CD4-positive, alpha-beta memory T cell (primary cell): ENCODE measurements at regions of chr19 and their contacts with region 1.

Region 1: GRCh38 chr19:16382775-16383543 is 58.3 kb downstream of the KLF2 start:
- DNase-seq: peak; percentile 72 to 80 (median 77)
- H3K4me3 ChIP-seq: peak overlapping the region in 1 of 2 donors; percentile 50
- H3K4me3 Mint-ChIP-seq: peak overlapping the region; percentile 63 to 85 (median 77)
- H3K27ac ChIP-seq: peak overlapping the region; percentile 66
- H3K27ac Mint-ChIP-seq: peak overlapping the region; percentile 93 to 97 (median 96)
- H3K4me1 ChIP-seq: peaks cover 69% of the 10 kb centered on the region
- H3K4me1 Mint-ChIP-seq: peaks cover 35 to 76% (median 60%) of the 10 kb centered on the region in 4 donors
- H3K27me3 ChIP-seq: no peaks in the 10 kb centered on the region
- H3K27me3 Mint-ChIP-seq: no peaks in the 10 kb centered on the region

Region 2: DNA sequence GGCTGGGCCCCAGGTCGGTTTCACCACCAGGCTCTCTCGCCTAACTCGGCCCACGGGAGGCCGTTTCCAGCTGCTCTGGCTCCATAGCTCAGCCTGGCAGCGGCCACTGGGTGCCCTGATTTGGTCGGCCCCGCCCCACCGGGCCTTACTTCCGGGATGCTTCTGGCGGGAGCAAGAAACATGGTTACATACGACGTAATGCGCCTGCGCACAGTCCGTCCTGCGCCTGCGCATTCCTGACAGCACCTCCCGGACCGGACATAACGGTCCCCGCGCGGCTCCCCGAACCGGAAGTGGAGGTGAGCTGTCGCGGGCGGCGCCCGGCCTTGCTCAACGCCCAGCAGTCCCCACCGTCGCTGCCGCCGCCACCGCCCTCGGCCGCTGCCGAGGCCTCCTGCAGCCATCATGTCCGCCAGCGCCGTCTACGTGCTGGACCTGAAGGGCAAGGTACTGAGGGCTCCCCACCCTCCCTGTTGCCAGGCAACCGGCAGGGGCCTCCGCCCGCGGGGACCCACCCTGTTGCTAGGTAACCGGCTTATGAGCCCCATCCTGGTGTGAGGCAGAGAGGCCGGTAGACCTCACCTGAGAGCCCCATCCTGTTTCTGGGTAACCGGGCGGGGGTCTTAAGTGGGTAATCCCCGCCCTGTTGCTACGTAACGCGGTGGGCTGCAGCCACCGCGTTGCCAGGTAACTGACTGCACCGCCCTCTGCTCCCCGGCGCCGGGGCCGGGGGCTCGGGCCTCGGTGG is 185.2 kb before region 1 on chr19 and contains the start of gene AP1M1:
- CTCF ChIA-PET with region 1: interaction called, 4 read pairs
- POLR2A ChIA-PET with region 1: no interaction called
- intact Hi-C with region 1: loop called (anchors 5 kb)
- DNase-seq: peak; percentile 97 to 98 (median 98)
- H3K4me3 ChIP-seq: peak within 1 kb of the TSS; percentile 70 to 88
- H3K4me3 Mint-ChIP-seq: peak within 1 kb of the TSS; percentile 87 to 95 (median 90)
- H3K27ac ChIP-seq: peak within 1 kb of the TSS; percentile 90
- H3K27ac Mint-ChIP-seq: peak within 1 kb of the TSS; percentile 95 to 99 (median 98)
- H3K4me1 ChIP-seq: peaks cover 27% of the 10 kb centered on the region
- H3K4me1 Mint-ChIP-seq: peaks cover 25 to 53% (median 40%) of the 10 kb centered on the region in 4 donors
- H3K27me3 ChIP-seq: no peaks in the 10 kb centered on the region
- H3K27me3 Mint-ChIP-seq: no peaks in the 10 kb centered on the region
- total RNA-seq, gene AP1M1: 107 TPM

Region 3: GRCh38 chr19:16259385-16260159 is 123.4 kb before region 1 on chr19:
- CTCF ChIA-PET with region 1: interaction called, 10 read pairs
- POLR2A ChIA-PET with region 1: interaction called, 9 read pairs
- intact Hi-C with region 1: no loop called
- DNase-seq: no peak
- H3K4me3 ChIP-seq: no peak overlapping the region
- H3K4me3 Mint-ChIP-seq: peak overlapping the region in 5 of 8 donors; percentile 2 to 62 (median 18)
- H3K27ac ChIP-seq: no peak overlapping the region
- H3K27ac Mint-ChIP-seq: peak overlapping the region in 2 of 7 donors; percentile 84 to 86
- H3K4me1 ChIP-seq: peaks cover 59% of the 10 kb centered on the region
- H3K4me1 Mint-ChIP-seq: peaks cover 23 to 70% (median 44%) of the 10 kb centered on the region in 4 donors
- H3K27me3 ChIP-seq: no peaks in the 10 kb centered on the region
- H3K27me3 Mint-ChIP-seq: no peaks in the 10 kb centered on the region

Region 4: GRCh38 chr19:16324384-16325160 is 58.4 kb before region 1 on chr19 and contains the start of gene KLF2:
- CTCF ChIA-PET with region 1: interaction called, 133 read pairs
- POLR2A ChIA-PET with region 1: interaction called, 6,478 read pairs
- intact Hi-C with region 1: loop called (anchors 1 kb)
- DNase-seq: peak; percentile 95 to 98 (median 96)
- H3K4me3 ChIP-seq: peak within 1 kb of the TSS; percentile 38 to 100
- H3K4me3 Mint-ChIP-seq: peak within 1 kb of the TSS; percentile 79 to 87 (median 83)
- H3K27ac ChIP-seq: peak within 1 kb of the TSS; percentile 95
- H3K27ac Mint-ChIP-seq: peak within 1 kb of the TSS; percentile 96 to 99 (median 98)
- H3K4me1 ChIP-seq: peaks cover 34% of the 10 kb centered on the region
- H3K4me1 Mint-ChIP-seq: peaks cover 15 to 64% (median 31%) of the 10 kb centered on the region in 4 donors
- H3K27me3 ChIP-seq: no peaks in the 10 kb centered on the region
- H3K27me3 Mint-ChIP-seq: peaks cover 0 to 7% of the 10 kb centered on the region in 2 donors
- total RNA-seq, gene KLF2: 425 to 437 TPM

Region 5: GRCh38 chr19:16363133-16363851 is 19.7 kb before region 1 on chr19:
- CTCF ChIA-PET with region 1: interaction called, 56 read pairs
- POLR2A ChIA-PET with region 1: interaction called, 1,006 read pairs
- intact Hi-C with region 1: no loop called
- DNase-seq: no peak
- H3K4me3 ChIP-seq: no peak overlapping the region
- H3K4me3 Mint-ChIP-seq: peak overlapping the region in 7 of 8 donors; percentile 25 to 62 (median 44)
- H3K27ac ChIP-seq: peak overlapping the region; percentile 89
- H3K27ac Mint-ChIP-seq: peak overlapping the region in 6 of 7 donors; percentile 53 to 94 (median 89)
- H3K4me1 ChIP-seq: peaks cover 100% of the 10 kb centered on the region
- H3K4me1 Mint-ChIP-seq: peaks cover 52 to 90% (median 64%) of the 10 kb centered on the region in 4 donors
- H3K27me3 ChIP-seq: no peaks in the 10 kb centered on the region
- H3K27me3 Mint-ChIP-seq: no peaks in the 10 kb centered on the region

Region 6: GRCh38 chr19:16417660-16418596 is 35.0 kb after region 1 on chr19:
- CTCF ChIA-PET with region 1: interaction called, 17 read pairs
- POLR2A ChIA-PET with region 1: no interaction called
- intact Hi-C with region 1: loop called (anchors 2 kb)
- DNase-seq: peak; percentile 62 to 72 (median 66)
- H3K4me3 ChIP-seq: no peak overlapping the region
- H3K4me3 Mint-ChIP-seq: no peak overlapping the region
- H3K27ac ChIP-seq: no peak overlapping the region
- H3K27ac Mint-ChIP-seq: peak overlapping the region in 5 of 7 donors; percentile 32 to 66 (median 57)
- H3K4me1 ChIP-seq: peaks cover 7% of the 10 kb centered on the region
- H3K4me1 Mint-ChIP-seq: peaks cover 1 to 13% (median 4%) of the 10 kb centered on the region in 4 donors
- H3K27me3 ChIP-seq: no peaks in the 10 kb centered on the region
- H3K27me3 Mint-ChIP-seq: no peaks in the 10 kb centered on the region

Region 7: DNA sequence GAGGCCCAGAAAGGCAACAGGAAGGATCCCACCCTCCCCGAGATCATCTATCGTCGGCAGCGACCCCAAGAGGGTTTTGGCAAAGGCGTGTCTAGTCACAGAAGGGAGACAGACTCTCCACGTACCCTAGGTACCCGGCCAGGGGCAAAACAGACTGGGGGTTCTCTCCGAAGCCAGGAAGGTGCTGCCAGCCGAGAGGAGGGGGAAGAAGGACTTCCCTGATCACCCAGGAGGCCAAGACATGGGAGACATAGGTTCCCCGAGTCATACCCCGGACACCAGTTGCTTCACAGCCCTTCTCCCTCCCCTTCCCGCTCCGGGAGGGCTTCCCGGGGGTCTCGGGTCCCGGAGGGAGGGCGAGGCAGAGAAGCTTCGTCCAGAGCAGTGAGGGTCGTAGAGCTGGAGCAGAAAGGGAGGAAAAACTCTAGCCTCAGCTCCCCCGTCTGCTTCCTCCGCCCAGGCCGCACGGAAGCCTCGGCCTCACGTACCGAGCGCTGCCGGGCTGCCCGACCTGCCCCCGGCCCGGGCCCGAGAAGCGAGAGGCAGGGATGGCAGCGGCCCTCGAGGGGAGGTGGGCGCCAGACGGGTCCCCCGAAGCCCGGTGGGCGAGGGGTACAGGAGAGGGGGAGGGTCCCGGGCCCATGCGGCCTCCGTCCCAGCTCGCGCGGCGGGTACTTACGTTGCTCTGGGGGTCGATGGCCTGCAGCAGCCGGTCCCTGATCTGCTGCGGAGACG is 244.4 kb after region 1 on chr19:
- CTCF ChIA-PET with region 1: no interaction called
- POLR2A ChIA-PET with region 1: no interaction called
- intact Hi-C with region 1: no loop called
- DNase-seq: peak in 3 of 5 donors; percentile 5 to 44 (median 10)
- H3K4me3 ChIP-seq: peak overlapping the region; percentile 54 to 71
- H3K4me3 Mint-ChIP-seq: peak overlapping the region; percentile 89 to 95 (median 90)
- H3K27ac ChIP-seq: peak overlapping the region; percentile 77
- H3K27ac Mint-ChIP-seq: peak overlapping the region; percentile 87 to 96 (median 91)
- H3K4me1 ChIP-seq: peaks cover 51% of the 10 kb centered on the region
- H3K4me1 Mint-ChIP-seq: peaks cover 31 to 55% (median 45%) of the 10 kb centered on the region in 4 donors
- H3K27me3 ChIP-seq: no peaks in the 10 kb centered on the region
- H3K27me3 Mint-ChIP-seq: no peaks in the 10 kb centered on the region